ENCODE measurements at regions of chr19 and their contacts with region 1.

Region 1: DNA sequence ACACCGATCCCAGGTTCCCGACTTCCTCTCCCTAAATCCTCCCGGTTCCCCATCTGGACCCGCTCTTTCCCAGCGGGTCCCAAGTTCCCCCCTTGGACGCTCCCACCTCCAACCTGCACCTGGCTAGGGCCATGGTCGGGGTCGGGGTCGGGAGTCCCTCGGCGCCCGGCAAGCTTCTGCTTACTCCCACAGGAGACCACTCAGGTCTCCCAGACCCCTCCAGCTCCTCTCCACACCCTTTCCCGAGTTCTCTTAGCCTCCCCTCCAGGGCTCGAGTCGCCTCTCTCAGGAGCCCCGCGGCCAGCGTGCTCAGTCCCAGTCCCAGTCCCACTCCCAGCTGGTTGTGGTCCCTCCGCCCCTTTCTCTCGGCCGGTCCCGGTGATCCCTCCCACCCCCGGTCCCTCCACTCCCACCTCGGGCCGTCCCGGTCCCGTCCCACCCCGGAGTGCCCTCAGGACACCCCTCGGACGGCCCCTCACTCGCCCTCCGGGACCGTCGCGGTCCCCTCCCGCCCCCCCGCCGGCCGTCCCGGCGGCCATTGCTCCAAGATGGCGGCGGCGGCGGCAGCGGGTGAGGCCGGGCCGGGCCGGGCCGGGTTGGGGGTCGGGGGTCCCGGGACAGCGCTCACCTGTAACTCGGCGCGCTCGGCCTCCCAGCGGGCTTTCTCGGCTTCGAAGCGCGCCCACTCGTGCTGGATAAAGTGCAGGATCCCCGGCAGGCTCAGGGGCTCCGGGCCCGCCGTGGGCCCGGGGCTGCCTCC is at the start of gene FKRP:
- DNase-seq: peak; percentile 55 to 61
- H3K4me3 ChIP-seq: peak within 1 kb of the TSS; percentile 99
- H3K4me3 Mint-ChIP-seq: peak within 1 kb of the TSS; percentile 94
- H3K27ac Mint-ChIP-seq: peak within 1 kb of the TSS; percentile 95
- H3K4me1 ChIP-seq: no peaks in the 10 kb centered on the region
- H3K4me1 Mint-ChIP-seq: peaks cover 21% of the 10 kb centered on the region
- H3K27me3 ChIP-seq: no peaks in the 10 kb centered on the region
- H3K27me3 Mint-ChIP-seq: no peaks in the 10 kb centered on the region
- CTCF ChIP-seq: no peak
- total RNA-seq, gene FKRP: 30.6 and 33.1 TPM in 2 replicates

Region 2: DNA sequence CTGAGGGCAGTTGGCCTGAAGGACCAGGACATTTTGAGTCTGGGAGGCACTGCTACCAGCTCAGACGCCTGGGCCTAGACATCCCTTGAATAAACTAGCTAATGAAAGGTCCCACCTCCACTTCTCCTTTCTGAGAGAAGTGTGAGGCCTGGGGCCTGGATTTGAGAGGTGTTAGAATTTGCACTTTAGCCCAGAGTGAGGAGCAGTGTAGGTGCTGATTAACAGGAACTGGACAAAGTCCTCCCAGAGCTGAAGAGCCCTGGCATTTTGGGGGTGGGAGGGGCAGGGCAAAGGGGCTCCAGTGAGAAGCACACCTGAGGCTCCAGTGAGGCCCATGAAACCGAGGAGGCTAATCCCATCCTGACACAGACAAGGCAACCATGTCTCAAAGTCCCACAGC is 57.9 kb after region 1 on chr19:
- CTCF ChIA-PET with region 1: no interaction called
- POLR2A ChIA-PET with region 1: interaction called, 12 read pairs
- intact Hi-C with region 1: no loop called
- DNase-seq: peak; percentile 59 to 91
- H3K4me3 ChIP-seq: no peak overlapping the region
- H3K4me3 Mint-ChIP-seq: no peak overlapping the region
- H3K27ac Mint-ChIP-seq: peak overlapping the region; percentile 56
- H3K4me1 ChIP-seq: peaks cover 36% of the 10 kb centered on the region
- H3K4me1 Mint-ChIP-seq: no peaks in the 10 kb centered on the region
- H3K27me3 ChIP-seq: no peaks in the 10 kb centered on the region
- H3K27me3 Mint-ChIP-seq: no peaks in the 10 kb centered on the region
- CTCF ChIP-seq: no peak

Measured in Caco-2 (cell line).